ENCODE measurements at regions of chr9 and their contacts with region 1.

Region 1: GRCh38 chr9:133121198-133121939 is at the start of gene RALGDS:
- DNase-seq: peak; percentile 73
- H3K4me3 ChIP-seq: peak within 1 kb of the TSS; percentile 34 to 45 (median 41)
- H3K27ac ChIP-seq: no peak within 1 kb of the TSS
- H3K4me1 ChIP-seq: peaks cover 30% of the 10 kb centered on the region
- H3K27me3 ChIP-seq: no peaks in the 10 kb centered on the region
- CTCF ChIP-seq: no peak
- POLR2A ChIP-seq: no peak
- total RNA-seq, gene RALGDS: 41.4 and 43.1 TPM in 2 replicates

Region 2: GRCh38 chr9:133133681-133134418 is 12.5 kb after region 1 on chr9:
- CTCF ChIA-PET with region 1: interaction called, 19 read pairs
- POLR2A ChIA-PET with region 1: interaction called, 13 read pairs
- dilution Hi-C with region 1: no loop called
- intact Hi-C with region 1: loop called (anchors 1 kb)
- DNase-seq: peak; percentile 98
- H3K4me3 ChIP-seq: no peak overlapping the region
- H3K27ac ChIP-seq: peak overlapping the region; percentile 80
- H3K4me1 ChIP-seq: peaks cover 30% of the 10 kb centered on the region
- H3K27me3 ChIP-seq: no peaks in the 10 kb centered on the region
- CTCF ChIP-seq: peak in 1 of 2 donors; percentile 1
- POLR2A ChIP-seq: peak; percentile 85

Region 3: GRCh38 chr9:133170716-133171559 is 49.6 kb after region 1 on chr9:
- CTCF ChIA-PET with region 1: no interaction called
- POLR2A ChIA-PET with region 1: no interaction called
- dilution Hi-C with region 1: no loop called
- intact Hi-C with region 1: no loop called
- DNase-seq: no peak
- H3K4me3 ChIP-seq: no peak overlapping the region
- H3K27ac ChIP-seq: no peak overlapping the region
- H3K4me1 ChIP-seq: no peaks in the 10 kb centered on the region
- H3K27me3 ChIP-seq: peaks cover 8 to 13% of the 10 kb centered on the region in 2 experiments
- CTCF ChIP-seq: no peak
- POLR2A ChIP-seq: no peak